ENCODE measurements at regions of chr11 and their contacts with region 1.

Region 1: DNA sequence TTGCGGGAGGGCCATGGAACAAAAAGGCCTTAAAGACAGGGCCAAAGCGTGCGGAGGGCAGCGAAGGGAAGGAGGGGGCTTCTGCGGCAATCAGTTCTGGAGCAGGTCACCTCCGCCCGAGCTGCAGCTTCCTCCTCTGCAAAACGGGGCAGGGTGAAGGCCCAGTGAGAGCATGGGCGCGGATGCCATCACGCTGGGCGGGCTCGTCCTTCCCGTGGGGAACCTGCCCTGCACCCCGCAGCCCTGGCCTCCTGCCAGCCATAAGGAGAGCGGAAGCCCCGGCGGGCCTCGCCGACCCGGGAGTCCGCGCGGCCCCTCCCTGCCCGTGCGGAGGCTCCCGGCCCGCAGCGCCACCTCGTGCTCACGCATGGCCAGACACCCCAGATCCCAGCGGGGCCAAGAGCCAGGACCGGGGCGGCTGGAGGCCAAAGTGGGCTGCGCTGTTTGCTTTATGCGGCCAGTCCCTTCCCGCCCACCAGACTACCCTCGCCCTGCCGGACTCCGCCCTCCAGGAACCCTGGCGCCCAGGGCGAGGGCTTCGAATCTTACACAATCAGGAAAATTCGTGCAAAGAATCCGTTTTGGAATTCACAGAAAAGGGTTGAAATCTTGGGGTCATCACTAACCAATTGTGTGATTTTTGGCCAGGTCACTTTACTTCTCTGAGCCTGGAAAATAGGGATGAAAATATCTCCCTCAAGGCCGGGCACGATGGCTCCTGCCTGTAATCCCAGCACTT is 16.1 kb downstream of the TSKU start:
- DNase-seq: peak; percentile 72 to 87 (median 86)
- H3K4me3 ChIP-seq: peak overlapping the region in 5 of 7 experiments; percentile 6 to 74 (median 46)
- H3K27ac ChIP-seq: no peak overlapping the region
- H3K4me1 ChIP-seq: peaks cover 0 to 10% (median 9%) of the 10 kb centered on the region in 4 experiments
- H3K27me3 ChIP-seq: peaks cover 0 to 2% (median 0%) of the 10 kb centered on the region in 5 experiments

Region 2: DNA sequence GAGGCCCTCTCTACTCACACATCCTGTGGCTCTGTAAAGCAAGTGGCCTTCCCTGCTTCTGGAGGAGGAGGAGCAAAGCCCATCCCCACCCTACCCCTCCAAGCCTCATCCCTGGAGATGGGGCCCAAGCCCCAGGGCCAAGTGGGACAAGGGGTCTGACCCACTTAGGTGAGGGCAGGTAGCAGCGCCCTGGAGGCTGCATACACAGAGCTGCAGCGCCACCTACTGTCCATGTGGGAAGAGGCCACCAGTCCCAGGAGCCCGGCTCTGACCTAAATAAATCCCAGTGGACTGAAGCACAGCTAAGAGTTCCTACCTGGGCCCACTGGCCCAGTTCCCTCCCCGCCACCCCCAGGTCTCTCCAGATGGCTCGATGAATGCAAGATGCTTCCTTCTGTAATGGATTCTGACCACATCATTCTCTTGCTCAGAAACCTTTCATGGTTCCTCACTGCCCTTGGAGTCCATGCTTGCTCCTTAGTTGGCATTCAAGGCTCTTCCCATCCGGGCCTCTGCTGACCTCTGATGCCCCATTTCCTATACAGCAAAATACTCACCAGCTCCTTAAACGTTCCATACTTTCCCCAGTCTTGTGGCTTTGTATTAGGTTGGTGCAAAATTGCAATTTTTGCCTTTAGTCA is 480.4 kb before region 1 on chr11:
- CTCF ChIA-PET with region 1: no interaction called
- POLR2A ChIA-PET with region 1: no interaction called
- DNase-seq: peak; percentile 76 to 86 (median 83)
- H3K4me3 ChIP-seq: no peak overlapping the region
- H3K27ac ChIP-seq: no peak overlapping the region
- H3K4me1 ChIP-seq: peaks cover 0 to 16% (median 10%) of the 10 kb centered on the region in 4 experiments
- H3K27me3 ChIP-seq: peaks cover 0 to 12% (median 5%) of the 10 kb centered on the region in 5 experiments

Region 3: GRCh38 chr11:76721755-76722677 is 77.2 kb before region 1 on chr11:
- CTCF ChIA-PET with region 1: interaction called, 13 read pairs
- POLR2A ChIA-PET with region 1: no interaction called
- DNase-seq: peak; percentile 77 to 89 (median 82)
- H3K4me3 ChIP-seq: no peak overlapping the region
- H3K27ac ChIP-seq: no peak overlapping the region
- H3K4me1 ChIP-seq: peaks cover 0 to 3% (median 1%) of the 10 kb centered on the region in 4 experiments
- H3K27me3 ChIP-seq: peaks cover 0 to 11% (median 4%) of the 10 kb centered on the region in 5 experiments

Region 4: GRCh38 chr11:76734456-76735420 is 64.5 kb before region 1 on chr11:
- CTCF ChIA-PET with region 1: interaction called, 123 read pairs
- POLR2A ChIA-PET with region 1: interaction called, 4 read pairs
- DNase-seq: no peak
- H3K4me3 ChIP-seq: no peak overlapping the region
- H3K27ac ChIP-seq: no peak overlapping the region
- H3K4me1 ChIP-seq: no peaks in the 10 kb centered on the region
- H3K27me3 ChIP-seq: peaks cover 0 to 15% (median 0%) of the 10 kb centered on the region in 5 experiments

Region 5: DNA sequence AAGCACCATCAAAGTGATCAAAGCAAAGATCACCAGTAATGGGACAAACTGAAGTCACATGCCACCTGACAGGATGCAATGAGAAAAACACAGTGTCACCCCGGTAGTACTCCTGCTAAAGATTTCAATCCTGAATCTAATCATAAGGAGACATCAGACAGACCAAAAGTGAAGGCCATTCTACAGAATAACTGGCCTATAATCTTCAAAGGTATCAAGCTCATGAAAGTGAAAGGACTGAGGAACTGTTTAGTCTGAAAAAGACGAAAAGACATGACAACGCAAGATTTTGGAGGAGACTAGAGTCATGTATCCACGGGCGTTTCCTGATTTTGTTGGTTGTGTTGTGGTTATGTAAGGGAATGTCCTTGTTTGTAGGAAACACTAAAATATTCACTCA is 58.5 kb before region 1 on chr11:
- CTCF ChIA-PET with region 1: interaction called, 123 read pairs
- POLR2A ChIA-PET with region 1: no interaction called
- DNase-seq: no peak
- H3K4me3 ChIP-seq: no peak overlapping the region
- H3K27ac ChIP-seq: no peak overlapping the region
- H3K4me1 ChIP-seq: peaks cover 0 to 9% (median 0%) of the 10 kb centered on the region in 4 experiments
- H3K27me3 ChIP-seq: peaks cover 0 to 4% (median 0%) of the 10 kb centered on the region in 5 experiments